ENCODE measurements at regions of chr3 and their contacts with region 1.

Region 1: GRCh38 chr3:145326666-145327065 is 834.3 kb downstream of the PLOD2 start:
- DNase-seq: no peak
- H3K4me3 ChIP-seq: no peak overlapping the region
- H3K27ac ChIP-seq: no peak overlapping the region
- H3K4me1 ChIP-seq: no peaks in the 10 kb centered on the region
- H3K27me3 ChIP-seq: no peaks in the 10 kb centered on the region
- CTCF ChIP-seq: no peak
- EP300 ChIP-seq: no peak
- POLR2A ChIP-seq: no peak

Region 2: DNA sequence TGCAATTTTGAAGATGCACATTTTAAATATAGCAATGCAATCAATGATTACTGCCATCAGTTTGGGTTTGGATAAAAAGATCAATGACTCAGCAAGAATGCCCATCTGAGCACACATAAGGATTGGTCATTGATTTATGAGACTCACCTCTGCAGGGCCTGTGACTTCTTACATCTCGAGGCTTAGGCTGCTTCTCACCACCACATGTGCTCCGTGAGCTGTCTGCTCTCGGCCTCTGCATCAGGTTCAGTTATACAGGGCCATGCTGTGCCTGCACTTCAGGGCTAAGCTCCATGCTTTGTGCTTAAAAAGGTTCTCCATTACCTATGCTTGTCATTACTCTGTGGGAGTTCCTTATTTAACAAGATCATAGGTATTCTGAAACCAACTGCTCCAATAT is 467.5 kb before region 1 on chr3:
- in situ Hi-C with region 1: no loop called
- intact Hi-C with region 1: no loop called
- DNase-seq: no peak
- H3K4me3 ChIP-seq: no peak overlapping the region
- H3K27ac ChIP-seq: no peak overlapping the region
- H3K4me1 ChIP-seq: no peaks in the 10 kb centered on the region
- H3K27me3 ChIP-seq: no peaks in the 10 kb centered on the region
- CTCF ChIP-seq: no peak
- EP300 ChIP-seq: no peak
- POLR2A ChIP-seq: no peak

Region 3: DNA sequence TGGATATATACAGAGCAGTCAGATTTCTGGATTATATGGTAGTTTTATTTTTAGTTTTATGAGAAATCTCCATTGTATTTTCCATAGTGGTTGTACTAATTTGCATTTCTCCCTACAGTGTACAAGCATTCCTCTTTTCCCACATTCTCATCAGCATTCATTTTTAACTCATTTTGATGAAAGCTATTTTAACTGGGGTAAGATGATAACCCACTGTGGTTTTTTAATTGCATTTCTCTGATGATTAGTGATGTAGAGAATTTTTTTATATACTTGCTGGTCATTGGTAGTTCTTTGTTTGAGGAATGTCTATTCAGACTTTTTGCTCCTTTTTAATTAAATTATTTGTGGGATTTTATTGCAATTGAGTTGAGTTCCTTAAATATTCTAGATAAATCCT is 451.5 kb before region 1 on chr3:
- in situ Hi-C with region 1: no loop called
- intact Hi-C with region 1: no loop called
- DNase-seq: no peak
- H3K4me3 ChIP-seq: no peak overlapping the region
- H3K27ac ChIP-seq: no peak overlapping the region
- H3K4me1 ChIP-seq: no peaks in the 10 kb centered on the region
- H3K27me3 ChIP-seq: no peaks in the 10 kb centered on the region
- CTCF ChIP-seq: no peak
- EP300 ChIP-seq: no peak
- POLR2A ChIP-seq: no peak

Region 4: DNA sequence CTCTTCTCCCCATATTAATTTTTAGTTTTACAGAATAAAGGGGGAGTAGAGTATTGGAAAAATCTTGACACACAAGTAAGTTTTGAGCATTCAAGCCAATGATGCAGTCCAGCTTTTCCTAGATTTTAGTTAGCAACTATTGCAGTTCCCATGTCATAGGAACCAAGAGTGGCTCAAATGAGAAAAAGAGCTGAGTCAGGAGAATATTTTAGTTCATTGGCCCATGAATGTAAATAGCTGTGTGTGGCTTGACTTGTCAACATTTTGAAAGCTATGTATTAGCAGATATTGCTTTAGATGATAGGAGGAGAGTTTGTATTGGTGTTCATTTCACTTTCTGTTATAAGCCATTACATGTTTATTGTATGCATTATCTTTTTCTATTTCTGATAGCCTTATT is 19.4 kb before region 1 on chr3:
- in situ Hi-C with region 1: no loop called
- intact Hi-C with region 1: loop called (anchors 1 kb)
- DNase-seq: no peak
- H3K4me3 ChIP-seq: no peak overlapping the region
- H3K27ac ChIP-seq: no peak overlapping the region
- H3K4me1 ChIP-seq: no peaks in the 10 kb centered on the region
- H3K27me3 ChIP-seq: no peaks in the 10 kb centered on the region
- CTCF ChIP-seq: no peak
- EP300 ChIP-seq: no peak
- POLR2A ChIP-seq: no peak

Region 5: GRCh38 chr3:145370544-145371252 is 44.0 kb after region 1 on chr3:
- in situ Hi-C with region 1: no loop called
- intact Hi-C with region 1: no loop called
- DNase-seq: no peak
- H3K4me3 ChIP-seq: no peak overlapping the region
- H3K27ac ChIP-seq: no peak overlapping the region
- H3K4me1 ChIP-seq: no peaks in the 10 kb centered on the region
- H3K27me3 ChIP-seq: no peaks in the 10 kb centered on the region
- CTCF ChIP-seq: no peak
- EP300 ChIP-seq: no peak
- POLR2A ChIP-seq: no peak

Region 6: DNA sequence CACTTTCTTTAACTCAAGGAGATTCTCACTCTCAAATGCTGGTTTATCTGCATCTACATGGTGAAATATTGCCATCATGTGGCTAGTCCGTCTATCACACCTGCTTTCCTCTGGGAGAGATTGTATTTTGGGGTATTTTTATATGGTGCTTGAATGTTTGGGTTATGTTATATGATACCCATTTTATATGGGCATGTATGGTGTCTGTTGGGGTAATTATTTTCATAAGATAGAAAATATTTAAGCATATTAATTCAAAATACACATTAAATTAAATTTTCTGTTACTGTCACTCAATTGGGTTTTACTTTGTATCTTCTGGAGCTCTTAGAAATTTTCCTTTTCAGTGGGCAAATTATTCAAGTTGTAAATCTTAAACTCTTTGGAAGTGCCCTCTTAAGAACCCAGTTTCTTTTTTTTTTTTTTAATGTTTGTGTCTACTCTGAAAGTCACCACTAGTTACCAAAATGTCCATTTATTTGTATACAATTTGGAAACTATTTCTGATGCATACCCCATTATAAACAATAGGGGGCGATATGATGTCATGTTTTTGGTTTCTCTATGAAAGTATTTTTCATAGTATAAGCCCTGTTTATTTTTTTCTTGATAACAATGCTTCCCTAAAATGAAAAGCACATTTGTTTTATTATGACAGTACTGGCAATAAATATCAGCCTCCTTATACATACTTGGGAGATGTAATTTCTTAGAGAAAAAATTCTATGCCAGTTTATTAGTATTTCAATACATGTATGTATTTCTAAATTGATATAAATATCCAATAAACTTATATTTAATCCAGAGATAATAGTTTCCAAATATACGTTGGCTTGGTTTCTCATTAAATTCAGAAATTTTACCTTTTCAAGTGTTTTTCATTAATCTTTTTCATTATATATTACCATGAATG is 1314.5 kb after region 1 on chr3:
- in situ Hi-C with region 1: no loop called
- intact Hi-C with region 1: no loop called
- DNase-seq: no peak
- H3K4me3 ChIP-seq: no peak overlapping the region
- H3K27ac ChIP-seq: no peak overlapping the region
- H3K4me1 ChIP-seq: no peaks in the 10 kb centered on the region
- H3K27me3 ChIP-seq: no peaks in the 10 kb centered on the region
- CTCF ChIP-seq: peak; percentile 29 to 50 (median 37)
- EP300 ChIP-seq: no peak
- POLR2A ChIP-seq: no peak

Measured in transverse colon (tissue), 4 donors.